Activated CD4-positive, alpha-beta memory T cell treated with anti-CD3 and anti-CD28 coated beads for 36 hours (primary cell): ENCODE measurements at regions of chr20 and their contacts with region 1.

Region 1: GRCh38 chr20:17530716-17531664 is at the start of gene BFSP1:
- DNase-seq: peak; percentile 72
- H3K4me3 Mint-ChIP-seq: peak within 1 kb of the TSS; percentile 88
- H3K27ac Mint-ChIP-seq: peak within 1 kb of the TSS; percentile 70
- H3K4me1 Mint-ChIP-seq: peaks cover 17% of the 10 kb centered on the region
- H3K27me3 Mint-ChIP-seq: peaks cover 3% of the 10 kb centered on the region
- total RNA-seq, gene BFSP1: 0.34 to 0.36 TPM

Region 2: GRCh38 chr20:17666481-17666880 is 135.5 kb after region 1 on chr20:
- CTCF ChIA-PET with region 1: no interaction called
- POLR2A ChIA-PET with region 1: no interaction called
- intact Hi-C with region 1: loop called (anchors 5 kb)
- DNase-seq: peak; percentile 3
- H3K4me3 Mint-ChIP-seq: no peak overlapping the region
- H3K27ac Mint-ChIP-seq: no peak overlapping the region
- H3K4me1 Mint-ChIP-seq: peaks cover 43% of the 10 kb centered on the region
- H3K27me3 Mint-ChIP-seq: no peaks in the 10 kb centered on the region

Region 3: GRCh38 chr20:17693444-17694001 is 162.5 kb after region 1 on chr20:
- CTCF ChIA-PET with region 1: no interaction called
- POLR2A ChIA-PET with region 1: no interaction called
- intact Hi-C with region 1: no loop called
- DNase-seq: no peak
- H3K4me3 Mint-ChIP-seq: no peak overlapping the region
- H3K27ac Mint-ChIP-seq: no peak overlapping the region
- H3K4me1 Mint-ChIP-seq: no peaks in the 10 kb centered on the region
- H3K27me3 Mint-ChIP-seq: peaks cover 14% of the 10 kb centered on the region